A549 (cell line): ENCODE measurements at regions of chr3 and their contacts with region 1.

Region 1: DNA sequence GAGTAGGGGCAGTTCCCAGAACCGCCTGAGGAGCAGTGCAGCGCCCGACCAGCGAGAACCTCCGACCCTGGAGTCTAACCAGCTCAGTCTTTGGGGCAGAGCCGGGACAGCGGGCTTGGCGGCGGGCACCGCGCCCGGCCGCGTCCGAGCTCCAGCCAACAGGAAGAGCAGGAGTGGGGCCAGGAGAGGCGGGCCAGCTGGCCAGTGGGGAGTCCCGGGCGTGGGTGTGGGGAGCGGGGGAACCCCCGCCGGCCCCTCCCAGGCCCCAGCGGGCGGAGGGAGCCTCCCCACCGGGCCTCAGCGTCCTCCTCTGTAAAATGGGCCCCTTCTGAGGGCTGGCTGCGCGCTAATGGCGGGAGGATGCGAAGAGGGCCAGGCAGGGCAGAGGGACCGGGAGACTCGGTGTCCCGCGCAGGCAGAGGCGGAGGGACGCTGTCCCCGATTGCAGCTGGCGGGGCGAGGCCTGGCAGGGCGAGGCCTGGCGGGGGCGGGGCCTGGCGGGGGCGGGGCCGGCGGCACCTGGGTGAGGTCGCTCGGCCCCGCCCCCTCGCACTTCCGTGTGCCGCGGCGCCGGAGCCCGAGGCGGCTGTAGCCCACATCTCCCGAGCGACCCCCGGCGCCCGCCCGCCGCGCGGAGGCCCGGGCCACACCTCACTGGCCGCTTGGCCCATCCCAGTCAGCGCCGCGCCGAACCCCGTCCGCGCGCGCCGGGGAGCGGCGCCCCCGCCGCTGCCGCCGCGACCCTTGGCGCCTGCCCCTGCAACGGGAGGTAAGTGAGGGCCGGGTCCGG is at the start of gene PRKCD:
- DNase-seq: peak; percentile 68 to 72
- ATAC-seq: peak; percentile 80 to 92
- H3K4me3 ChIP-seq: peak within 1 kb of the TSS; percentile 100
- H3K27ac ChIP-seq: peak within 1 kb of the TSS; percentile 90 to 92
- H3K4me1 ChIP-seq: peaks cover 29% of the 10 kb centered on the region
- CTCF ChIP-seq: no peak
- EP300 ChIP-seq: no peak
- POLR2A ChIP-seq: peak; percentile 57
- RAD21 ChIP-seq: no peak
- polyA plus RNA-seq, gene PRKCD: 17.1 and 18.3 TPM in 2 replicates

Region 2: GRCh38 chr3:53140847-53141845 is 19.7 kb before region 1 on chr3:
- CTCF ChIA-PET with region 1: interaction called, 14 read pairs
- POLR2A ChIA-PET with region 1: interaction called, 3 read pairs
- DNase-seq: peak in 1 of 2 experiments; percentile 18
- ATAC-seq: peak; percentile 32 to 45; a peak in 5 of 6 replicates
- H3K4me3 ChIP-seq: no peak overlapping the region
- H3K27ac ChIP-seq: no peak overlapping the region
- H3K4me1 ChIP-seq: peaks cover 22% of the 10 kb centered on the region
- CTCF ChIP-seq: no peak
- EP300 ChIP-seq: no peak
- POLR2A ChIP-seq: no peak
- RAD21 ChIP-seq: no peak

Region 3: DNA sequence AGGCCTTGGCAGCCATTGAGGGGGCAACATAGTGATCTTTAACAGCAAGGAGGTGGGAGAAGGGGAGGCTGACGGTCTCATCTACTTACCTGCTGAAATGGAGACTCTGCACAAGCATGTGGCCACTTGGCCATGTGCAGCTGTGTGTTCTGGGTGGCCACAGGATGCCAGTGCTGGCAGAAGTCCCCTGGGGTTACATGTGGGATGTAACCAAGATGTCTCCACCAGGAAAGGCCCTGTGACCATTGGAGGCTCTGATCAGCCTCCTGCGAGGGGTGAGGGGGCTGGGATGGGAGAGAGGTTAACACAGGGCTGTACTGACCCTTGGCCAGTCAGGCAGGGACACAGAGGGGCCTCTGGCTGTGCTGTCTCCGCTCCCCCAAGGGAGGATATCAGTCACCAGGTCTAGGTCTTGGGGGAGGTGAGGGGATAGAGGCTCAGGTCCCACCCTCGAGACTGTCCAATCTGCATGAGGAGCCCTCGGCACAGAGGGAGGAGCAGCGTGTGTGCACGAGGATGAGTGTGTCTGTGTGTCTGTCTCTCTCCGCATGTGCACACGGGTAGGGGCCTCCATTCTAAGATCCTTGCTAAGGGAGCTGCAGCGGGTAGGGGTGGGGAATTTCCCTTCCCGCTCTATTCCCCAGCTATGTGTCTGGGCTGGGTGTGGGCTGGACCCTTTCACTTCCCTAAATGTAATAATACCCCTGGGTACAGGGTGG is 19.6 kb after region 1 on chr3:
- CTCF ChIA-PET with region 1: no interaction called
- POLR2A ChIA-PET with region 1: no interaction called
- DNase-seq: no peak
- ATAC-seq: no peak; a peak in 1 of 6 replicates
- H3K4me3 ChIP-seq: no peak overlapping the region
- H3K27ac ChIP-seq: no peak overlapping the region
- H3K4me1 ChIP-seq: no peaks in the 10 kb centered on the region
- CTCF ChIP-seq: no peak
- EP300 ChIP-seq: no peak
- POLR2A ChIP-seq: no peak
- RAD21 ChIP-seq: no peak

Region 4: GRCh38 chr3:53213276-53213675 is 52.4 kb after region 1 on chr3:
- CTCF ChIA-PET with region 1: no interaction called
- POLR2A ChIA-PET with region 1: no interaction called
- DNase-seq: no peak
- ATAC-seq: no peak
- H3K4me3 ChIP-seq: no peak overlapping the region
- H3K27ac ChIP-seq: no peak overlapping the region
- H3K4me1 ChIP-seq: no peaks in the 10 kb centered on the region
- CTCF ChIP-seq: no peak
- EP300 ChIP-seq: no peak
- POLR2A ChIP-seq: no peak
- RAD21 ChIP-seq: no peak

Region 5: GRCh38 chr3:53274938-53275605 is 114.2 kb after region 1 on chr3:
- CTCF ChIA-PET with region 1: no interaction called
- POLR2A ChIA-PET with region 1: no interaction called
- DNase-seq: no peak
- ATAC-seq: no peak
- H3K4me3 ChIP-seq: no peak overlapping the region
- H3K27ac ChIP-seq: peak overlapping the region; percentile 99 to 100; a peak in 5 of 6 replicates
- H3K4me1 ChIP-seq: peaks cover 22% of the 10 kb centered on the region
- CTCF ChIP-seq: no peak
- EP300 ChIP-seq: no peak
- POLR2A ChIP-seq: no peak
- RAD21 ChIP-seq: no peak